Body of pancreas (tissue), 4 donors: ENCODE measurements at regions of chr14 and their contacts with region 1.

Region 1: DNA sequence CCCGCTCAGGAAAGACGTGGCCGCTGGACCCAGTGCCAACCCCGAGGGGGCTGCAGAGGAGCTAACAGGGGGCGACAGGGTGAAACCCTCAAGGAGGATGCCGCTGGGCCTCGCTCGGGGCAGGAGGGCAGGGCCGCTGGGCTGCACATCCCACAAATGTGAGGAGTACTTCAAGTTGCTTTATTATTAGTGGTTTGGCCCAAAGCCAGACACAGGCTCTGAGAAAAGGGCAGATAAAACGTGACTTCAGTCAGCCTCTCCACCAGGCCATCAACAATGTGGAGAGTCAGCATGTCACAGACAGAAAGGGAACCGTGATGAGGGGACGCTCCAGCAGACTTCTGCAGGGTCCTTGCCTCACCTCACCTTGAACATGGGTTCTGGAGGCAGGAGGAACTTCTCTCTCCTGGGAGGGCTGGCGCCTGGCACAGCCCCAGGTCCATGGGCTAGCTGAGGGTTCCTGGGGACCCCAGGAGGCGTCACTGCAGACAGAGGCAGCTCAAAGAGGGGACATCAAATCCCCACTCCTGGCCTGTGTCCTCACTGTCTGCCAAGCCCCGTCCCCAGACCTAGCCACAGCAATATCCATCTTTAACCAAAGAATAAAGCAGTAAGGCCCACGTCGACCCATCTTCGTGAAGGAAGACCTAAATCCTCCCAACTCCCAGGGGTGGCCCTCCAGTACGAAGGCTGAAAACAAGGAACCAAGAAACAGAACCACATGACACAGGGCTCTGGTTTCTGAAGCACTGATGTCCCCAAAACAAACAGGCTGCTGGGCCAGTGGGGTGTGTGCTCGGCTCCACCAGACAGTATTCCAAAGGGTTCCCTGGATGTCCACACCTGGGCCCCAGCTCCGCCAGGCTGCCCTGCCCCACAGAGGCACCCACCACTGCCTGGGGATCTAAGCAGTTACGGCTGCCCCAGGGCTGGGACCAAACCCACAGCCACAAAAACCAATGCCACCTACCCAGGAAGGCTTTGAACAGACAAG is 35.1 kb downstream of the CCDC85C start:
- DNase-seq: peak in 3 of 4 donors; percentile 31 to 37 (median 36)
- ATAC-seq: no peak
- H3K4me3 ChIP-seq: no peak overlapping the region
- H3K27ac ChIP-seq: peak overlapping the region in 3 of 4 donors; percentile 4 to 97 (median 80)
- H3K4me1 ChIP-seq: peaks cover 100% of the 10 kb centered on the region
- H3K27me3 ChIP-seq: no peaks in the 10 kb centered on the region
- CTCF ChIP-seq: no peak
- POLR2A ChIP-seq: no peak

Region 2: GRCh38 chr14:99327063-99327843 is 241.6 kb before region 1 on chr14:
- intact Hi-C with region 1: no loop called
- DNase-seq: no peak
- ATAC-seq: no peak
- H3K4me3 ChIP-seq: no peak overlapping the region
- H3K27ac ChIP-seq: no peak overlapping the region
- H3K4me1 ChIP-seq: no peaks in the 10 kb centered on the region
- H3K27me3 ChIP-seq: no peaks in the 10 kb centered on the region
- CTCF ChIP-seq: no peak
- POLR2A ChIP-seq: no peak

Region 3: DNA sequence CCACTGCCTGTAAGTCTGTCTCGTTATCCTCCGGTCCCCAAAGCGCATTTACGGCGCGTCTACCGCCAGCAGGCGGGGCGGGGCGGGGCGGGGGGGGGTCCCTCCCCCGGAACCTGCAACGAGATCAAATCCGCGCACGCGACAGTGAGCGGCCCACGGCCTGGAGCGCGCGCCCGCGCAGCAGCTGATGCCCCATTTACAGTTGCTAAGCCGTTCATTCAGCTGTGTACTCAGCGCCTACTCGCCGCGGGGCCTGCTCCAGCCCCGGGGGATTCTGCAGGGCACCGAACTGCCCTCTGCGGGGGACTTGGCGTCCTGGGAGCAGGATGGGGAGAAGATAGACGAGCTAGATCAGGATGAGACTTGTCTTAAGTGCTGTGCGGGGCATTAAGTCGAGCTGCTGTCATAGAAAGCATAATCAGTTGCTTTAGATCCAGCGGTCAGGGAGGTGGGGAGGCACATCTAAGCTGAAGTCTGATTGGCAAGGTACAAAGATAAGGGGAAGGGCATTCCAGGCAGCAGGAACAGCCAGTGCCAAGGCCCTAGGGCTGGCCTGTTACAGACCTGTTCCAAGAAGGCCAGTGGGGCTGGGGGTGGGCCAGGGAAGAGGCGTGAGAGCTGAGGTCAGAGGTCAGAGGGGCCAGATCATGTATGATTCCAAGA is 36.6 kb after region 1 on chr14:
- intact Hi-C with region 1: loop called (anchors 5 kb)
- DNase-seq: peak; percentile 68 to 75 (median 70)
- ATAC-seq: peak; percentile 22
- H3K4me3 ChIP-seq: peak overlapping the region; percentile 21 to 51
- H3K27ac ChIP-seq: peak overlapping the region; percentile 91 to 95 (median 94)
- H3K4me1 ChIP-seq: peaks cover 44% of the 10 kb centered on the region
- H3K27me3 ChIP-seq: no peaks in the 10 kb centered on the region
- CTCF ChIP-seq: peak in 1 of 7 experiments; percentile 16
- POLR2A ChIP-seq: no peak